Activated naive CD4-positive, alpha-beta T cell treated with anti-CD3 and anti-CD28 coated beads, Interleukin-2, amount 10 ng/mL, durations not matched to agents 7 days and 5 days (primary cell): ENCODE measurements at regions of chr4 and their contacts with region 1.

Region 1: GRCh38 chr4:47836641-47837093 is 1.2 kb downstream of the CORIN start:
- DNase-seq: peak; percentile 71
- H3K4me3 Mint-ChIP-seq: peak overlapping the region; percentile 81
- H3K27ac Mint-ChIP-seq: no peak overlapping the region
- H3K4me1 Mint-ChIP-seq: peaks cover 34% of the 10 kb centered on the region
- H3K27me3 Mint-ChIP-seq: peaks cover 36% of the 10 kb centered on the region

Region 2: DNA sequence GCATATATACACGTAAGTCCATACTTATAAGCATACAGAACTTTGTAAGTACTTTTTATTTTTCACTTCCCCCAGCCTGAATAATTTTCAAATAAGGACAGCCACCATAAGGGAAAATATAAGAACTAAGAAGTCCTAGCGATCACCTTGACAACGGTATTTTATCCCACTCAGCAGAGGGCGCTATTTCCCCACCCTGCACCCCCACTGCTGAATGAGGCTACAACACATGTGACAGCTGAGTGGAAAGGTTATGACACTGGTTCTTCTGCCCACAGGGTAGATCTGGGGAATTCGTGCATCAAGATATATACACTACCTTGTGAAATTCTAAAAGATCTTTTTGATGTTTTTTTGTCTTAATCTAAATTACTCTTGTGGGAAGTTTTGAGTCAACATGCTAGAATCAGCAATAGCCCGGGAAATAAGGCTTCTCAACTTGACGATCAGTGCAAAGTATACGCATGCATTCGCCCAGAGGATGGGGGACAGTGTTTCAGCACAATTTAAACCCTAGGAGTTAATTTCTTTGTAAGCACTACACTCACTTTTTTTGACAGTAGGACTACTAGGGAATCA is 150.3 kb before region 1 on chr4:
- CTCF ChIA-PET with region 1: interaction called, 14 read pairs
- DNase-seq: peak; percentile 78
- H3K4me3 Mint-ChIP-seq: no peak overlapping the region
- H3K27ac Mint-ChIP-seq: no peak overlapping the region
- H3K4me1 Mint-ChIP-seq: no peaks in the 10 kb centered on the region
- H3K27me3 Mint-ChIP-seq: no peaks in the 10 kb centered on the region

Region 3: GRCh38 chr4:47704693-47705325 is 131.9 kb before region 1 on chr4:
- CTCF ChIA-PET with region 1: interaction called, 29 read pairs
- DNase-seq: peak; percentile 32
- H3K4me3 Mint-ChIP-seq: no peak overlapping the region
- H3K27ac Mint-ChIP-seq: no peak overlapping the region
- H3K4me1 Mint-ChIP-seq: no peaks in the 10 kb centered on the region
- H3K27me3 Mint-ChIP-seq: peaks cover 26% of the 10 kb centered on the region